ENCODE measurements at regions of chr3 and their contacts with region 1.

Region 1: DNA sequence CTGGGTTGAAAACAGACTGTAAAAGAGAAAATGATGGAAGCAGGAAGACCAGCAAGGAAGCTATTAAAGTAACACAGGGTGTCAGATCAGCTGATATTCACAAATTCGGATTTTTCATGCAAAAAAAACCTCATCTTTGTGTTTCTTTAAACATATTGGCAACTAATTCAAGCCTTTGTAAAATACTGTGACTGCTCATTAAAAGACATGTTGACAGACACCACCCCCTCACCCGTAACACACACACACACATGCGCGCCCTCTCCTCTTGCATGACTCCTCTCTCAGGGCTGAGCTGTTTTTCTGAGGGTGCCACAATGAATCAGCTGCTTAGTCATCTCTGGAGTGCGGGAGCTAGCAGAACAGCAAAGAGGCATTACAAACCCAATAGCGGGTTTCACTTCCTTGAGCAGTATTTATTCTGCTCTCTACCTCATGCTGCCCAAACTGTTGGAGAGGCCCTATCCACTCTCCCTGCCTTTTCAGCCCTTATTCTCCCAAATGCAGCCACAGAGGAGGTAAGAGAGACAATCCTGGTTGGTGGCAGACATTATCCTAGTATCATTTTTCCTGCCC is 35.8 kb upstream of the CCDC80 start:
- DNase-seq: peak; percentile 97
- H3K4me3 Mint-ChIP-seq: peak overlapping the region; percentile 14
- H3K27ac Mint-ChIP-seq: peak overlapping the region; percentile 54
- H3K4me1 Mint-ChIP-seq: peaks cover 42% of the 10 kb centered on the region
- H3K27me3 Mint-ChIP-seq: peaks cover 14% of the 10 kb centered on the region

Region 2: DNA sequence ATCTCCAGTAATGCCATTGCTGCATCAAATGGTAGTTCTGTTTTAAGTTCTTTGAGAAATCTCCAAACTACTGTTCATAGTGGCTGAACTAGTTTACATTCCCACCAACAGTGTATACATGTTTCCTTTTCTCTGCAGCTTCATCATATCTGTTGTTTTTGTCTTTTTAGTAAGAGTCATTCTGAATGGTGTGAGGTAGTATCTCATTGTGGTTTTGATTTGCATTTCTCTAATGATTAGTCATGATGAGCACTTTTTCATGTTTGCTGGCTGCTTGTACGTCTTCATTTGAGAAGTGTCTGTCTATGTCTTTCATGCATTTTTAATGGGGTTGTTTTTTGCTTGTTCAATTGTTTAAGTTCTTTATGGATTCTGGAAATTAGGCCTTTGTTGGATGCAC is 533.5 kb before region 1 on chr3:
- CTCF ChIA-PET with region 1: no interaction called
- intact Hi-C with region 1: loop called (anchors 5 kb)
- DNase-seq: no peak
- H3K4me3 Mint-ChIP-seq: peak overlapping the region; percentile 36
- H3K27ac Mint-ChIP-seq: peak overlapping the region; percentile 48
- H3K4me1 Mint-ChIP-seq: peaks cover 19% of the 10 kb centered on the region
- H3K27me3 Mint-ChIP-seq: no peaks in the 10 kb centered on the region

Region 3: GRCh38 chr3:112602217-112602838 is 74.4 kb before region 1 on chr3:
- CTCF ChIA-PET with region 1: no interaction called
- intact Hi-C with region 1: loop called (anchors 1 kb)
- DNase-seq: no peak
- H3K4me3 Mint-ChIP-seq: no peak overlapping the region
- H3K27ac Mint-ChIP-seq: no peak overlapping the region
- H3K4me1 Mint-ChIP-seq: peaks cover 19% of the 10 kb centered on the region
- H3K27me3 Mint-ChIP-seq: peaks cover 11% of the 10 kb centered on the region

Region 4: DNA sequence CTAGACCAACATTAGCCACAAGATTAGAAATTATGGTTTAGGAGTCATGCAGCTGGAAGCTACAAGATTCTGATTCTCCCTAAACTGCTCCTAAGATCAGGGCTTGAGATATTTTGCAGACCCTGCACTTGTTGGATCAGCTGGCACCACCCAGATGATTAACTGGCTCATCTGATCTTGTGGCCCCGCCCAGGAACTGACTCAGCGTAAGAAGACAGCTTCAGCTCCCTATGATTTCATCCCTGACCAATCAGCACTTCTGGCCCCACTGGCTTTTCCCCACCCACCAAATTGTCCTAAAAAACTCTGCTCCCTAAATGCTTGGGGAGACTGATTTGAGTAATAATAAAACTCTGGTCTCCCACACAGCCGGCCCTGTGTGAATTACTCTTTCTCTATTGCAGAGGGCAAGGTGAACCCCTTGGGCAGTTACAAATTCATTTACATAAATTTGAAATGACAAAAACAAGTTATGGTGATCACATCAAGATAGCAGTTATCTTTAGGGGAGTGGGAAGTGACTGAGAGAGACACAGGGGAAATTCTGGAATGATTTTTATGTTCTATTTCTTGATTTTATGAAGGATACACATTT is 93.4 kb after region 1 on chr3:
- CTCF ChIA-PET with region 1: no interaction called
- intact Hi-C with region 1: loop called (anchors 1 kb)
- DNase-seq: peak; percentile 57
- H3K4me3 Mint-ChIP-seq: no peak overlapping the region
- H3K27ac Mint-ChIP-seq: no peak overlapping the region
- H3K4me1 Mint-ChIP-seq: peaks cover 19% of the 10 kb centered on the region
- H3K27me3 Mint-ChIP-seq: no peaks in the 10 kb centered on the region

Region 5: DNA sequence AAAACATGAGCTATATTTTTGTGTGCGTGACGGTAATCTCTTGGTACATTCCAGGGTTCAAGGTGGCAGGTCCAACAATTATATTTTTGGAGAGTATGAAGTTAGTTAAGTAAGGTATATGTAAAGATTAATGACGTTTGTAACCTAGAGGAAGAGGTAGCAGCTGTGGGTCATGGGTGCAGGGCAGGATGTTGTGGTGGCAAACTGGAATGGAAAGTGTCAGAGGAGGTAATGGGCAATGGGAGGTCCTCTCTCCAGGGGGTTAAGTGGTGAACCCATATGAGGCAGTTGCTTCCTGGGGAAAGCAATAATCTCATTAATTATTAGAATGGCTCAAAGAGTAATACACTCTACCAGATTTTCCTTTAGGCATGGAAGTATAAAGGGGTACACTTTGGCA is 170.9 kb after region 1 on chr3:
- CTCF ChIA-PET with region 1: no interaction called
- intact Hi-C with region 1: no loop called
- DNase-seq: peak; percentile 44
- H3K4me3 Mint-ChIP-seq: no peak overlapping the region
- H3K27ac Mint-ChIP-seq: no peak overlapping the region
- H3K4me1 Mint-ChIP-seq: peaks cover 17% of the 10 kb centered on the region
- H3K27me3 Mint-ChIP-seq: no peaks in the 10 kb centered on the region

Region 6: DNA sequence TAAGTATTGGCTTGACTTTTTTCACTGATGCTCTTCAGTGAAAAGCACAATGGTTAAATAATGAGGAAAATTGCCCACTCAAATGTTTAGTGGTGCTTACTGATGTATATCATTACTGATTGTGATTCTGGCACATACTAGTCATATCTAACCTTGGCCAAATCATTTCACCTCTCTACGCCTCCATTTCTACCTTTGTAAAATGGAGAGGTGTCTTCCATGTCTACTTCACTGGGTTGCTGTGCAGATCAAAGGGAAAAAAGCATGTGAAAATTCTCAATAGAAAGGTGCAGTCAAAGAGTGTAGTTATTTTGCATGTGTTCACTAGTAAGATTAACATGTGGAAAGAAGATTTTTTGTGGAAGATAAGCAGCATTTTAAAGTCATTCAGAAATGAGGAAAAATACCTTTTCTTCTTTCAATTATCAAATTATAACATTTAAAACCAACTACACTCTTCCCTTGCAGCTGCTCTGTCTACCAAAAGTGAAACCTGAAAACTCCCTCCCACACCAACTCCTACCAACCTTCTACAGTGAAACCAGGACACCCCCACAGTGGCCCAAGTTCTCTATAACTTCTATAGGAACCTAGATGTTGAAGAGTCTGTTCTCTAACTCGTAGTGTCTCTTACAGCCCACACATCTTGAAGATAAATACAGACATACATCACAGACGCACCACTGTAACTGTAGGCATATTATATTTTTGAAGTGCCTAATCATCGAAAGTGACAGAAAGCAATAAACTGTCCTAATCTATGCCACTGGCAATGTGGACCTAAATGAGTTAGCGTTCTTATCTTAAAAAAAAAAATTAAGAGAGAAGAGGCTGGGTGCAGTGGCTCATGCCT is 296.8 kb after region 1 on chr3:
- CTCF ChIA-PET with region 1: interaction called, 3 read pairs
- intact Hi-C with region 1: loop called (anchors 1 kb)
- DNase-seq: peak; percentile 66
- H3K4me3 Mint-ChIP-seq: peak overlapping the region; percentile 70
- H3K27ac Mint-ChIP-seq: peak overlapping the region; percentile 52
- H3K4me1 Mint-ChIP-seq: peaks cover 82% of the 10 kb centered on the region
- H3K27me3 Mint-ChIP-seq: no peaks in the 10 kb centered on the region

Region 7: DNA sequence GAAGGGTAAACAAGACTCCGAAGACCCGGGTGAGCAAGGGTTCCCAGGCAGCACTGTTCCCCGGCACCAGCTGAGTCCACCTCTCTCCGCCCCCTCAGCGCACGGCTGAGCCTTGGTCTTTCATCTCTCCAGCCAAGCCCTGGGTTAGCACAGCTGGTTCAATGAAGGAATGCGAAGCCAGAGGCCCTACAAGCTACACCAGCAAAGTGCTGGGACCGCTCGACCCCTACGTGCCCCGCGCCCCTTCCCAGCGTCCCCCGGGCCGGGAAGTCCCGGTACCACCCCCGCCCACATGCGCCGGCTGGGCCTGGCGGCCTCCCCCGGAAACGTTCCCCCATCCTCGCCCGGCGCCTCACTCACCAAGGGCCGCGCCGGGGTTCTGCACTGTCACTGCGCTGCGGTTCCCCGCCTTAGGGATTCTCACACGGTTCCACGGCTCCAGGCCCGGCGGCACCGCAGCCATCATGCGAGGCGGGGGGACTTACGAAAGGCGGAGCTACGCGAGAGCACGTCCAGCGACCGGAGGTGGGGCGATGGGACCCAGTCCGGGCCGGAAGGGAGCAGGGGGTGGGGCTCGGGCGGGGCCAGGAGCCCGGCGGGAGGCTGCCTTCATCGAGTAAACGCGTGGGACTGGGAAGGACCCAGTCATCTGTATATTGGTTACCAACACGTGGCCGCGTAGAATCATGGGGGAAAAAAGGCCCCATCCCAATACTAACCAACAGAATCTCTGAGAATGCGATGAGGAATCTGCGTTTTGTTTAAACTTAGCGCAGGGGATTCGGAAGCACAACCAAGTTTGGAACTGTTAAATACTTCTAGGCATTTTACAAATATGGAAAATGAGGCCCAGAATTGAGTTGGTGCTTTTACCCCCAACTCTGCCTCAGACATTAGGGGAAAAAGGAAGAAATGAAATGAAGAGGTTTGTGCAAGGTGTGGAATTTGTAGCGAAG is 342.7 kb after region 1 on chr3:
- CTCF ChIA-PET with region 1: no interaction called
- intact Hi-C with region 1: loop called (anchors 1 kb)
- DNase-seq: peak; percentile 94
- H3K4me3 Mint-ChIP-seq: peak overlapping the region; percentile 94
- H3K27ac Mint-ChIP-seq: peak overlapping the region; percentile 99
- H3K4me1 Mint-ChIP-seq: peaks cover 64% of the 10 kb centered on the region
- H3K27me3 Mint-ChIP-seq: no peaks in the 10 kb centered on the region

Measured in activated naive CD4-positive, alpha-beta T cell treated with anti-CD3 and anti-CD28 coated beads for 36 hours (primary cell).